Sciatic nerve (tissue), 2 donors: ENCODE measurements at regions of chr14 and their contacts with region 1.

Region 1: GRCh38 chr14:49677643-49678042 is 10.4 kb downstream of the POLE2 start:
- DNase-seq: no peak
- ATAC-seq: no peak

Region 2: GRCh38 chr14:49516286-49516685 is 161.4 kb before region 1 on chr14:
- intact Hi-C with region 1: loop called (anchors 5 kb)
- DNase-seq: no peak
- ATAC-seq: no peak

Region 3: GRCh38 chr14:49692811-49693734 is 15.4 kb after region 1 on chr14 and contains the start of gene KLHDC1:
- intact Hi-C with region 1: no loop called
- DNase-seq: peak; percentile 94
- ATAC-seq: peak; percentile 96
- total RNA-seq, gene KLHDC1: 20.7 TPM

Region 4: DNA sequence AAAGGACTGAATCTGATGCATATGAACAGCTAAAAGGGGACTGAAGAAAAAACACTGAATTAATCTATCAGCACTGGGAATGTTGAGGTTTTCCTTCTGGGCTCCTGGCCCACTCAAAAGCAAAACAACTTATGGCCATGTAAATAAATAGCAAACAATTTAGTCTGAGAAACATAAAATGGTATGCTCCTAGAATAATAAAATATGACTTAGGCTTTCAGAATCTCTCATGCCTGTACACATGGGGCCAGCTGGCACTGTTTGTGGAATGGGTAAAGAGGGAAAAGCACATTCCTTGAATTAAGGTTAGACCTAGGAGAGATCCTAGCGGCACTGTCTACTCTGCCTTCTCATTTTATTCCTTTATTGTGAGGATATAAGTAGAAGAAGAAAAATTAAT is 96.5 kb after region 1 on chr14:
- intact Hi-C with region 1: no loop called
- DNase-seq: no peak
- ATAC-seq: no peak

Region 5: DNA sequence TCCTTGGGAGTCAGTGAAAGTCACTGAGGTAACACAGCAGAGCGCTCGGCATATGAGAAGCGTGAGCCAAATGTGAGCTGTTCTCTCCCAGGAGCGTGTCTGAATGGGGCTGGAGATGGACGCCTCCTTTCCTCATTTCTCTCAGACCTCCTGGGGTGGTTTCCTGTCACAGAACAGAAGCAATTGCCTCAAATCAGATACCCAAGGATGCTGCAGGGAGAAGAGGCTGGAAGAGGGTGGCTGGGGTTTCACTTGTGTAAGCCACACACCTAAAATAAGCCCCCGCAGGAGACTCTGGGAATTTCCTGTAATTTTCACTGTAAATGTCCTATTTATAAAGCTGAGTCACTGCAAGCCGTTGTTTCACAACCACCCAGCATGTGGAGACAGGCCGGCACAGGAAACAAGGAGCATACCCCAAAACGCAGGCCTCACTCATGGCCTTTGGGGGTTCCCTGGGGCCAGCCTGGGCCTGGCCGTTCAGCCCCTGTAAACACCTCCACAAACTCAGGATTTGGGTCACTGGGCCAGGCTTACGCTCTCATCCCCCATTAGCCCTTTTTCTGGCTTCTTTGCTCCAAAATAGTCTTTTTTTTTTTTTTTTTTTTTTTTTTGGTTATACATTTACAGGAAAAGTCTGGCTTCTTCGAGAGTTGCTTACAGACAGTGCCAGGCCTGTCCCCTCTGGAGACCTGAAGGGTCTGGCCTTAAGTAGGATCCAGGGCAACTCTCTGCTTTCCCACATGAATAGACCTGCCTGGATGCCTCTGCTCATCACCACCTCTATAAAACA is 383.4 kb after region 1 on chr14:
- intact Hi-C with region 1: no loop called
- DNase-seq: peak; percentile 67
- ATAC-seq: peak; percentile 90